Colonic mucosa (tissue), 4 donors: ENCODE measurements at regions of chr9 and their contacts with region 1.

Region 1: DNA sequence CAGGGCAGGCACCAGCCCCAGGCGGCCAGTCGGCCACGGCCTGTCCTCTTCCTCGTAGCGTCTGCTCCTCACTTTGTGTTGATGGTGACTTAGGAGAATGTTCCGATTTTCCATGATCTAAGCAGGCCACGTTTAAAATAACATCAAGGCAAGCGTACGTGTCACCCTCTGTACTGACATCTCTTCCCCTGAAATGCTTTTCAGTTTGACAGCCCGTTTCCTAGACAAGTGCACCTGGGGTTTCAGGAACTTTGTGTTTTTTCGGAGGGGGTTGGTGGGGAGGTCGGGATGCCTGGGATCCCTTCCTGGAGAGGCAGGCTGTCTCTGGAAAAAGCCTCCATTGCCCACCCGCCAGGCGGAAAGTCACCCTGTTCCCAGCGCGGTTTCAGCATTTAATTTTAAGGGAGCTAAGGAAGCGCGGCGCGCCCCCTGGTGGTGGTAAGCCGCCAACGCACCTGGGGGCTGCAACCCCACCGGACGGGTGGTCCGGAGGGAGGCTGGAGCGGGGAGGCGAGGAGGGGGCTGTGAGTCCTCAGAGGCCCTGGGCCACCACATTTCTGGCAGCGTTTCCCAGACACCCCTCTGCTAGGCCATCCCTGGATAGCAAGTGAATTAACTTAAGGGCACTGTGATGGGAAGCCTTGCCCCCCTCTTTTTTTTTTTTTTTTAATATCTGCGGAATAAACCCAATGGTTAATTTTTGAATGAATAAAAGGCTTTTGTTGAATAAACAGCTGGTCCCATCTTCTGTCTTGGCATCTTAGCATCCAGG is 29.5 kb upstream of the HMCN2 start:
- DNase-seq: peak; percentile 63
- H3K4me3 ChIP-seq: no peak overlapping the region
- H3K27ac ChIP-seq: no peak overlapping the region
- H3K4me1 ChIP-seq: no peaks in the 10 kb centered on the region
- H3K27me3 ChIP-seq: no peaks in the 10 kb centered on the region
- CTCF ChIP-seq: peak; percentile 99

Region 2: GRCh38 chr9:129343424-129344375 is 892.4 kb before region 1 on chr9:
- intact Hi-C with region 1: no loop called
- DNase-seq: peak; percentile 45
- H3K4me3 ChIP-seq: no peak overlapping the region
- H3K27ac ChIP-seq: peak overlapping the region; percentile 36
- H3K4me1 ChIP-seq: no peaks in the 10 kb centered on the region
- H3K27me3 ChIP-seq: no peaks in the 10 kb centered on the region
- CTCF ChIP-seq: no peak

Region 3: GRCh38 chr9:129884220-129885017 is 351.7 kb before region 1 on chr9:
- intact Hi-C with region 1: loop called (anchors 10 kb)
- DNase-seq: peak; percentile 96
- H3K4me3 ChIP-seq: peak overlapping the region; percentile 34
- H3K27ac ChIP-seq: peak overlapping the region; percentile 81
- H3K4me1 ChIP-seq: peaks cover 7% of the 10 kb centered on the region
- H3K27me3 ChIP-seq: no peaks in the 10 kb centered on the region
- CTCF ChIP-seq: no peak

Region 4: DNA sequence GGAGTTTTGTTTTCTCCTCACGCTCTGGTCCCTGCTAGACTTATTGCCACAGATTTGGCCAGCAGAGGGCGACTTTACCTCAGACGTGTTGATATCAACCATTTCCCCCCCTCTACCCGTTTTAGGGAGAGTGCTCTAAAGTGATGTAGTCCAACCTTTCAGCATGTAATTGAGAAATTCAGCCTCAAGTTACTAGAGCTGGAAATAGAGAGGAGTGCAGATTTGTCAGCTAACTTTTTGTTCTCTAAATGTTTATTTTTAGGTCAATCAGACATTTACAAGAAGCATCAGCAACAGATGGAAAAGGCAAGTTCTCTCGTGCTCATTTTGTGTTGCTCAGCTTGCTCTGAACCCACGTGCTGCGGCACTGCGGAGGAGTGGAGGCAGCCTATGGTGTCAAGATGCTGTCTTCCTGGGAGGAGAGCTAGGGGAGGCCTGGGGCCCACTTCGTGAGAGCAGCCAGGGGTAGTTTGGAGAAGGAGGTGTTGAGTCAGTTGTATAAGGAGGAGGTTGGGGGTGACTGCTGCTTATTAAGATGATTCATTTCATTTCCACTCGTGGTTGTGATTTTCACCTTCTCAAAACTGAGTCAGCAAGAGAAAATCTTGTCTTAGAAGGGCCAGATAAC is 128.7 kb before region 1 on chr9:
- intact Hi-C with region 1: loop called (anchors 2 kb)
- DNase-seq: peak; percentile 87
- H3K4me3 ChIP-seq: no peak overlapping the region
- H3K27ac ChIP-seq: no peak overlapping the region
- H3K4me1 ChIP-seq: no peaks in the 10 kb centered on the region
- H3K27me3 ChIP-seq: no peaks in the 10 kb centered on the region
- CTCF ChIP-seq: peak; percentile 79

Region 5: DNA sequence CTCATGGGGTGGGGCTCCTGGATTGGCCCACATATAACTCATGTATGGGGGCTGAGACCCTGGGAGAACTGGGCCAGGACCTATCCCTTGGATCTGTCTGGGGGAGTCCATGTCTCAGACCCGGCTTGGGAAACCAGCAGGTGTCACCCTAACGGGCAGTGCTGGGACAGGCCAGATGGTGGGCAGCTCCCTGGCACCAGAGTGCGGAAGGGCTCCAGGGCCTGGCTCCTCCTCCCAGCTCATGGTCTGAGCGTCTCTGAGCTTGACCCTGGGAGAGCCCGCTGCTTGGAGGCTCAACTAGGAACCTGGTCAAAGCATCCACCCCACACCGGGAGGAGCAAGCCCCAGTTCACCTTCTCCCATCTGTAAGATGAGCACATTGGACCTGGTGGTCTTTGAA is 79.4 kb before region 1 on chr9:
- intact Hi-C with region 1: loop called (anchors 5 kb)
- DNase-seq: no peak
- H3K4me3 ChIP-seq: no peak overlapping the region
- H3K27ac ChIP-seq: no peak overlapping the region
- H3K4me1 ChIP-seq: no peaks in the 10 kb centered on the region
- H3K27me3 ChIP-seq: no peaks in the 10 kb centered on the region
- CTCF ChIP-seq: no peak